ENCODE measurements at regions of chr5 and their contacts with region 1.

Region 1: GRCh38 chr5:127019928-127020327 is 10.4 kb downstream of the MARCHF3 start:
- DNase-seq: no peak
- ATAC-seq: peak; percentile 77
- H3K4me3 ChIP-seq: no peak overlapping the region
- H3K27ac ChIP-seq: no peak overlapping the region
- H3K4me1 ChIP-seq: no peaks in the 10 kb centered on the region
- H3K27me3 ChIP-seq: no peaks in the 10 kb centered on the region
- CTCF ChIP-seq: no peak
- EP300 ChIP-seq: no peak
- POLR2A ChIP-seq: no peak
- RAD21 ChIP-seq: no peak

Region 2: DNA sequence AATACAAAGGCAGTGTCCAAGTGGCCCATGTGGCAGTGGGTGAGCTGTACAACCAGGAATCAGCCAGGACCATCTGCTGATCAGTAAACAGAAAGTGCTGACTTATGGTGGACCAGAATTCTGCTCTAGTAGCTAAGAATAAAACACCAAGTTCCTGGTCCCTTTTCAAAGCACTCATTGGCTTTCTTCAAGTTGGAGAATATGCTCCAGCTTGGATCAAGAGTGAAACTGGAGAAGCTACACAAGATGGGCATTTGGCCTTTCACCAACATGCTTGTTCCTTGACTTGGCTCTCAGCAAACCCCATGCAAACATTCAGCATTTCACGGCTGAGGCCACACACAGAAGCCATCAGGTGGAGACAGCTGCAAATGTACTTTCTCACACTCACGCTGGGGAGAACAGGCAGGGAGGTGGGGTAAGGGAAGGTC is 21.7 kb before region 1 on chr5:
- CTCF ChIA-PET with region 1: interaction called, 7 read pairs
- POLR2A ChIA-PET with region 1: interaction called, 4 read pairs
- RAD21 ChIA-PET with region 1: interaction called, 12 read pairs
- SMC1A ChIA-PET with region 1: interaction called, 29 read pairs
- in situ Hi-C with region 1: no loop called
- intact Hi-C with region 1: no loop called
- DNase-seq: peak; percentile 35
- ATAC-seq: peak; percentile 88
- H3K4me3 ChIP-seq: no peak overlapping the region
- H3K27ac ChIP-seq: peak overlapping the region; percentile 46
- H3K4me1 ChIP-seq: peaks cover 5% of the 10 kb centered on the region
- H3K27me3 ChIP-seq: no peaks in the 10 kb centered on the region
- CTCF ChIP-seq: peak in 1 of 3 experiments; percentile 27; a peak in 2 of 6 replicates
- EP300 ChIP-seq: no peak
- POLR2A ChIP-seq: no peak
- RAD21 ChIP-seq: peak; percentile 56